Ovary (tissue), 10 donors: ENCODE measurements at regions of chr9 and their contacts with region 1.

Region 1: DNA sequence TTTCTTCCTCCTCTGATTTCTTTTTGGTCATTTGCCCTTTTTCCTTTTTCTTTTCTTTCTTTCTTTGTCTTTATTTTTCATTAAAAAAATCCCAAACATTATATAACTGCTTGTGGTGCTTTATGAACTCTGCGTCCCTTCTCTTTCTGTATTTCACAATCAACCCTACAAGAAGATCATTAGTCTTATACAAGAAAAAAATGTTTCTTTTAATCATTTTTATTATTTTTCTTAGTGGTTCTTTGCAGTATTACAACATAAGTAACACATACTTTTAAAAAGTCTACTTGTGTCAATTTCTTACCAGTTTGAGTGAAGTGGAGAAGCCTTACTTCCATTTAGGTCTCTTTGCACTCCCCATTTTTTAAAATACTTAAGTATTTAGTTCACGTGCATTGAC is 212.7 kb upstream of the SMC2 start:
- DNase-seq: no peak
- H3K4me3 ChIP-seq: no peak overlapping the region
- H3K27ac ChIP-seq: no peak overlapping the region
- H3K4me1 ChIP-seq: no peaks in the 10 kb centered on the region
- H3K27me3 ChIP-seq: no peaks in the 10 kb centered on the region
- CTCF ChIP-seq: no peak
- EP300 ChIP-seq: no peak
- POLR2A ChIP-seq: no peak

Region 2: GRCh38 chr9:103804077-103804735 is 77.2 kb before region 1 on chr9:
- intact Hi-C with region 1: no loop called
- DNase-seq: no peak
- H3K4me3 ChIP-seq: no peak overlapping the region
- H3K27ac ChIP-seq: no peak overlapping the region
- H3K4me1 ChIP-seq: no peaks in the 10 kb centered on the region
- H3K27me3 ChIP-seq: no peaks in the 10 kb centered on the region
- CTCF ChIP-seq: no peak
- EP300 ChIP-seq: no peak
- POLR2A ChIP-seq: no peak

Region 3: DNA sequence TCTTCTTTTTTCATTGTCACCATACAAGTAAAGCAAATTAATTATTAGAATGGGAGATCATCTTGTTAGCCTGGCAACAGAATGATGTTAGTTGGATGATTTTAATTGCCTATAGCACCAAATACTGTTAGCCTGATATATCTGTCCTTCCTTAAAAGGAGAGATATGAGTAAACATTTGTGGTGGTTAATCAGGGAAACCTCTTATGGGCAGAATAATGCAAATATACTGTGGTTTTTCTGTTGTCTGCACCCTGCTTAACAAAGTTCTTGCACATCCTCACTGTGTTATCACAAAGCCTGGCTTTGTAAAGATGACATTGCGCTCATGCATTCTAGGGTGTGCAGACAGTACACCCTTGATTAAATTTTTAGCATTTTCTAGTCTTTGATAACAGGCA is 42.2 kb before region 1 on chr9:
- intact Hi-C with region 1: loop called in 1 of 4 experiments (anchors 1 kb)
- DNase-seq: no peak
- H3K4me3 ChIP-seq: no peak overlapping the region
- H3K27ac ChIP-seq: no peak overlapping the region
- H3K4me1 ChIP-seq: no peaks in the 10 kb centered on the region
- H3K27me3 ChIP-seq: no peaks in the 10 kb centered on the region
- CTCF ChIP-seq: no peak
- EP300 ChIP-seq: no peak
- POLR2A ChIP-seq: no peak

Region 4: DNA sequence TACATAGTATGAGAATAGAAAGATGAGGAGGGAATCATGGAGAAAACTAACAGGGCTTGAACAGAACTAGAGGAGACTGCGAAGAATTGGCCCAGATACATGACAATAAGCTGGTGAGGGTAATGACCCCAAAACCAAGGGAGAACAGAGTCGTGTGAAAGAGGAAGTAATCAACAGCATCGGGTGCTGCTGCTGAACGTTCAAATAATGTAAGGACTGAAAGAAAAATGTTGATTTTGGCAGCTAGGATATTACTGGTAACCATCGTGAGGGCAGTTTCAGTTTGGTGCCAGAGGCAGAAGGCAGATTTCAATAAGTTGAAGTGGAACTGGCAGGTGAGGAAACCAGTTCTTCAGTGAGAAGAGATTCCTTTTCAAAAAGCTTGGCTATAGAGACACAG is 145.9 kb after region 1 on chr9:
- intact Hi-C with region 1: no loop called
- DNase-seq: no peak
- H3K4me3 ChIP-seq: no peak overlapping the region
- H3K27ac ChIP-seq: no peak overlapping the region
- H3K4me1 ChIP-seq: no peaks in the 10 kb centered on the region
- H3K27me3 ChIP-seq: no peaks in the 10 kb centered on the region
- CTCF ChIP-seq: no peak
- EP300 ChIP-seq: no peak
- POLR2A ChIP-seq: no peak

Region 5: DNA sequence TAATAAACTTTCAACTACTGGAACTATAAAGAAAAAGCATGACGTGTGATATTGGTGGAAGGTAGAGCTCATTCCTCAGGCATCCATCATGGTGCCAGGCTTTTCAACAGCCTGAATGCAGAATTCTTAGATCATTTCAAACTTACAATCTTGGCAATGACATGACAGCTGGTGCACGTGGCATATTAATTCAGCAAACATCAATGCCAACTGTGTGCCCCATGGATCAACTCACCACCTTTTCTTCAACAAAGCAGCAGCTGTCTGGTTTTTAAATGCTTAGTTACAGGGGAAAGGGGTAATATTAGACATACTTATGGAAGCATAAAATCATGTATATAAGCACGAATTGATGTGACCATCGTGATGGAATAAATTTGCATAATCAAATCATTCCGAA is 566.6 kb after region 1 on chr9:
- intact Hi-C with region 1: no loop called
- DNase-seq: no peak
- H3K4me3 ChIP-seq: no peak overlapping the region
- H3K27ac ChIP-seq: no peak overlapping the region
- H3K4me1 ChIP-seq: no peaks in the 10 kb centered on the region
- H3K27me3 ChIP-seq: no peaks in the 10 kb centered on the region
- CTCF ChIP-seq: no peak
- EP300 ChIP-seq: no peak
- POLR2A ChIP-seq: no peak